Activated CD4-positive, alpha-beta memory T cell treated with anti-CD3 and anti-CD28 coated beads for 36 hours (primary cell): ENCODE measurements at regions of chr4 and their contacts with region 1.

Region 1: DNA sequence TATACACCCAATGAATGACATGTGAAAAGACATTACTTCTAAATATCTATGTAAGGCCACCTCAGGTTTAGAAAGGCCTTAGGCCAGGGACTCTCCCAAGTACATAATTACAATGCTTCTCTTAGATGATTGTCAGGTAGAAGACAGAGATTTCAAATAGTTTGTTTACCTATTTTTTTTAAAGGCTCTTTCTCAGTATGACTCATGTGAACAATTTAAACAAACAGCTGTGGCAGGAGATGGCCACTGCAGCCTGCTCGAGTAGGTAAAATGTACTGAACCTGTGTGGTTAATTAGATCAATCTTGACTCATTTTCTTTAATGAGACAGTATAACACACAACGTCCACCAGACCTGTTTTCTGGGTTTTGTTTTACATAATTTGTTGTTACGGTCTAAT is 50.2 kb downstream of the LEF1 start:
- DNase-seq: peak; percentile 47
- H3K4me3 Mint-ChIP-seq: peak overlapping the region; percentile 20
- H3K27ac Mint-ChIP-seq: peak overlapping the region; percentile 85
- H3K4me1 Mint-ChIP-seq: peaks cover 88% of the 10 kb centered on the region
- H3K27me3 Mint-ChIP-seq: no peaks in the 10 kb centered on the region

Region 2: GRCh38 chr4:108097990-108098553 is 20.4 kb before region 1 on chr4:
- CTCF ChIA-PET with region 1: no interaction called
- POLR2A ChIA-PET with region 1: interaction called, 24 read pairs
- intact Hi-C with region 1: loop called (anchors 1 kb)
- DNase-seq: no peak
- H3K4me3 Mint-ChIP-seq: no peak overlapping the region
- H3K27ac Mint-ChIP-seq: peak overlapping the region; percentile 70
- H3K4me1 Mint-ChIP-seq: peaks cover 93% of the 10 kb centered on the region
- H3K27me3 Mint-ChIP-seq: no peaks in the 10 kb centered on the region

Region 3: DNA sequence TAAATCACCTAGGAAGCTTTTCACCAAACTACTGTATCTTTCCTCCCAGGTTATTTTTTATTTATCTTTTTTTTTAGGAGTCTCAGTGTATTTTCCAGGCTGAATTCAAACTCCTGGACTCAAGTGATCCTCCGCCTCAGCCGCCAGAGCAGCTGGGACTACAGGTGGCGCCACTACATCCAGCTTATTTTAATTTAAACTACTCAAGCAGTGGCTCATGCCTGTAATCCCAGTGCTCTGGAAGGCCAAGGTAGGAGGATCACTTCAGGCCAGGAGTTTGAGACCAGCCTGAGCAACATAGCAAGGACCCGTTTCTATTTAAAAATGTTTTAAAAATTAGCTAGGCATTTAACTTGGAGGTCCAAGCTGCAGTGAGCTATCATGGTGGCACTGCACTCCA is 12.5 kb after region 1 on chr4:
- CTCF ChIA-PET with region 1: interaction called, 10 read pairs
- POLR2A ChIA-PET with region 1: interaction called, 4 read pairs
- intact Hi-C with region 1: no loop called
- DNase-seq: no peak
- H3K4me3 Mint-ChIP-seq: no peak overlapping the region
- H3K27ac Mint-ChIP-seq: peak overlapping the region; percentile 12
- H3K4me1 Mint-ChIP-seq: peaks cover 82% of the 10 kb centered on the region
- H3K27me3 Mint-ChIP-seq: no peaks in the 10 kb centered on the region

Region 4: DNA sequence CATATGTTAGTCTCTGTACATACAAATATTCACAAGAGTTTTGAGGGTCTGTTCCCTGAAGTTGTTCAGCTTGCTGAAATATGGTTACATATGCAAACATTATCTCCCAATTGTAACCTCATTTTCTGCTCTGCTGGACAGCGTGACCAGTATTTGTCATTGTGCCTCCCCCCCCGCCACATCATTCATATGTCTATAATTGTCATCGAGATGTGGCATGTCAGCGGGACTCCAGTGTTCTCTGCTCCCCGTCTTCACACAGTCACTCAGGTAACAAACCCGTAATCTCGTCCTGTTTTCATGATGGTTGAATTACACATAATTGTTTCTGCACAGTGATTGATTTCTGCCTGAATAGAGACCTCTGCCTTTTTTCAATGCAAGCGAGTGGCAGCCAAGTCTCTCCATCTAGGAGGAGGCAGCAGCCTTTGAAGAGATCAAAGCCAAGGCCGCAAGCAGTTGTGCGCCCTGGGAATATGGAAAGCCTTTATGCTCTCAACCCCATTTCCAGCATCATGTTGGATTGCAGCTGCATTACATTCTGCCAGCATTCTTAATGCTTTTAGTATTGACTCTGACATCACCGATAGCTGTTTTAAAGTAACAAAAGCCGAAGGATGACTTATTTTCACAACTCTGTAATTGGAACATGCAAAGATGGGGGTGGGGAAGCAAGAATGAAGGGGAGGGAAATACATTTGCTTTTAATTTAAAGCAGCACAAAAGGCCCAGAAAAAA is 22.9 kb after region 1 on chr4:
- CTCF ChIA-PET with region 1: interaction called, 3 read pairs
- POLR2A ChIA-PET with region 1: interaction called, 11 read pairs
- intact Hi-C with region 1: loop called (anchors 1 kb)
- DNase-seq: peak; percentile 67
- H3K4me3 Mint-ChIP-seq: peak overlapping the region; percentile 64
- H3K27ac Mint-ChIP-seq: peak overlapping the region; percentile 88
- H3K4me1 Mint-ChIP-seq: peaks cover 90% of the 10 kb centered on the region
- H3K27me3 Mint-ChIP-seq: no peaks in the 10 kb centered on the region